ENCODE measurements at regions of chr14 and their contacts with region 1.

Region 1: GRCh38 chr14:68788996-68789820 is 3.7 kb downstream of the ZFP36L1 start:
- DNase-seq: peak; percentile 59
- H3K4me3 ChIP-seq: peak overlapping the region; percentile 72 to 98 (median 90)
- H3K27ac ChIP-seq: peak overlapping the region; percentile 98
- H3K4me1 ChIP-seq: peaks cover 30% of the 10 kb centered on the region
- H3K27me3 ChIP-seq: no peaks in the 10 kb centered on the region
- CTCF ChIP-seq: peak; percentile 37 to 78

Region 2: GRCh38 chr14:68094158-68094557 is 695.0 kb before region 1 on chr14:
- CTCF ChIA-PET with region 1: no interaction called
- dilution Hi-C with region 1: no loop called
- in situ Hi-C with region 1: no loop called
- intact Hi-C with region 1: loop called (anchors 5 kb)
- DNase-seq: peak; percentile 71
- H3K4me3 ChIP-seq: no peak overlapping the region
- H3K27ac ChIP-seq: no peak overlapping the region
- H3K4me1 ChIP-seq: no peaks in the 10 kb centered on the region
- H3K27me3 ChIP-seq: no peaks in the 10 kb centered on the region
- CTCF ChIP-seq: peak in 1 of 2 donors; percentile 34

Region 3: GRCh38 chr14:68377459-68377858 is 411.7 kb before region 1 on chr14:
- CTCF ChIA-PET with region 1: no interaction called
- dilution Hi-C with region 1: no loop called
- in situ Hi-C with region 1: no loop called
- intact Hi-C with region 1: loop called (anchors 2 kb)
- DNase-seq: peak; percentile 73
- H3K4me3 ChIP-seq: no peak overlapping the region
- H3K27ac ChIP-seq: peak overlapping the region; percentile 70
- H3K4me1 ChIP-seq: peaks cover 21% of the 10 kb centered on the region
- H3K27me3 ChIP-seq: no peaks in the 10 kb centered on the region
- CTCF ChIP-seq: no peak

Region 4: GRCh38 chr14:68520637-68521556 is 268.3 kb before region 1 on chr14:
- CTCF ChIA-PET with region 1: no interaction called
- dilution Hi-C with region 1: no loop called
- in situ Hi-C with region 1: loop called in 1 of 2 experiments (anchors 25 kb)
- intact Hi-C with region 1: loop called (anchors 2 kb)
- DNase-seq: peak; percentile 97
- H3K4me3 ChIP-seq: no peak overlapping the region
- H3K27ac ChIP-seq: peak overlapping the region; percentile 96
- H3K4me1 ChIP-seq: peaks cover 44% of the 10 kb centered on the region
- H3K27me3 ChIP-seq: no peaks in the 10 kb centered on the region
- CTCF ChIP-seq: no peak

Region 5: DNA sequence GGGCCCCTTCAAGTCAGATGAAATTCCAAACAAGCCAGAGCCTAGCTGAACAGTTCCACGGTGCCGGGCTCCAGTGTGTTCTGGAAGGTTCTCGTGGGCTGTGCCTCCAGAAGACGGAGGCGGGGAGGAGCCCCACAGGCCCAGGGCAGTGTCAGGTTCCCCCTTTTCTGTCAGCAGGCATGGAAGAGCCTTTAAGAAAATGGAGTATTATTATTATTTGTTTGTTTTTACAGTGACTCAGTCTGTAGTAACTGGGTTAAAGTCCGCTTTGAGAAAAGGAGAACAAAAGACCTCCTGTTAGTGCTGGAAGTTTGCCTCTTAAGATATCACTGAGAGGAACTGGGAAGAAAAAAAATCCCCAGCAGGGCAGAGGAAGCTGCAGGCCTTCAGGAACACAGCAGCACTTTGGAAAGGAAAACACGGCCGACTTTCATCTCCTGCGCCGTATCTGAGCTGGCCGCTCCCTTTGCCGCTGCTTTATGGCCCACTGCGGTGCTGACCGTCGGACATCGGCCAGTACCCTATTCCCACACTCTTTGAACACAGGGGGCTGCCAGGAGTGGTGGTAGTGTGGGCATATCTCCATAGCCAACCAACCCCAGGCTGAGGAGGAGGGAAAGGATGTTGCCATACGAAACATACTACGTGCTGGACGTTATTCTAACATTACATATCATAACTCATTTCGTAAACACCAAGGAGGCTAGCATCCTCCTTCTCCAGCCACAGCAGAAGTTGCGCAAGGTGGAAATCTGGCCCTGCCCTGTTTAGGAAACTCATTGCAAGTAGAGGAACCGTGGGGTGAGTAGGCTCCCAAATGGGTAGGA is 190.4 kb before region 1 on chr14:
- CTCF ChIA-PET with region 1: no interaction called
- dilution Hi-C with region 1: no loop called
- in situ Hi-C with region 1: no loop called
- intact Hi-C with region 1: loop called (anchors 5 kb)
- DNase-seq: peak; percentile 94
- H3K4me3 ChIP-seq: peak overlapping the region in 1 of 3 experiments; percentile 2
- H3K27ac ChIP-seq: peak overlapping the region; percentile 85
- H3K4me1 ChIP-seq: peaks cover 27% of the 10 kb centered on the region
- H3K27me3 ChIP-seq: no peaks in the 10 kb centered on the region
- CTCF ChIP-seq: no peak

Region 6: DNA sequence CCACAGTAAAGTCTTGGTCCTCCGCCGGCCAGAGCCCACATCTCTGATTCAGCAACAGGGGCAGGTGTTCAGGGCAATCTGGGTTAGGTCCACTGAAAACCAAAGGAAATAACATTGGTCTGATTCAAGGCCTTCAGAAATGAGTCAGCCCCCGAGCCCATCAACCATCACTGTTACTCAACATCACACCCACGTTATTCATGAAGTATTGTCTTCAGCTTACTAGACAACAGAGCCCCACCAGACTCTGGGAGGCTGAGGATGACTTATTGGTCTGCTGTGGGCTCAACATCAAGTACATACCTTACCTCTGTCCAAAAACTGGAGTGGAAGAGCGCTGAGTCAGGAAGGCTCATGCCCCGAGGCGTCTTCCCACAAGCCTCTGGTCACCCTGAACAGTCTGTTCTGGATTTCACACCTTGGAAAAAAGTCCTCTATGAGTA is 93.9 kb before region 1 on chr14:
- CTCF ChIA-PET with region 1: no interaction called
- dilution Hi-C with region 1: no loop called
- in situ Hi-C with region 1: no loop called
- intact Hi-C with region 1: loop called (anchors 1 kb)
- DNase-seq: peak; percentile 100
- H3K4me3 ChIP-seq: no peak overlapping the region
- H3K27ac ChIP-seq: peak overlapping the region; percentile 91
- H3K4me1 ChIP-seq: peaks cover 32% of the 10 kb centered on the region
- H3K27me3 ChIP-seq: no peaks in the 10 kb centered on the region
- CTCF ChIP-seq: no peak

Region 7: GRCh38 chr14:68854421-68854820 is 65.2 kb after region 1 on chr14:
- CTCF ChIA-PET with region 1: no interaction called
- dilution Hi-C with region 1: no loop called
- in situ Hi-C with region 1: no loop called
- intact Hi-C with region 1: no loop called
- DNase-seq: no peak
- H3K4me3 ChIP-seq: no peak overlapping the region
- H3K27ac ChIP-seq: no peak overlapping the region
- H3K4me1 ChIP-seq: no peaks in the 10 kb centered on the region
- H3K27me3 ChIP-seq: no peaks in the 10 kb centered on the region
- CTCF ChIP-seq: no peak

Region 8: GRCh38 chr14:68899033-68899603 is 109.9 kb after region 1 on chr14:
- CTCF ChIA-PET with region 1: no interaction called
- dilution Hi-C with region 1: no loop called
- in situ Hi-C with region 1: no loop called
- intact Hi-C with region 1: no loop called
- DNase-seq: no peak
- H3K4me3 ChIP-seq: no peak overlapping the region
- H3K27ac ChIP-seq: no peak overlapping the region
- H3K4me1 ChIP-seq: peaks cover 34% of the 10 kb centered on the region
- H3K27me3 ChIP-seq: no peaks in the 10 kb centered on the region
- CTCF ChIP-seq: no peak